Stomach (tissue), 19 donors: ENCODE measurements at regions of chr1 and their contacts with region 1.

Region 1: GRCh38 chr1:230917284-230918135 is 49.2 kb upstream of the C1orf198 start:
- DNase-seq: peak; percentile 92 to 93
- H3K4me3 ChIP-seq: no peak overlapping the region
- H3K27ac ChIP-seq: no peak overlapping the region
- H3K4me1 ChIP-seq: peaks cover 0 to 7% (median 0%) of the 10 kb centered on the region in 4 donors
- H3K27me3 ChIP-seq: no peaks in the 10 kb centered on the region
- CTCF ChIP-seq: peak in 5 of 7 experiments; percentile 19 to 68 (median 60)
- EP300 ChIP-seq: no peak
- POLR2A ChIP-seq: no peak

Region 2: GRCh38 chr1:230797942-230798418 is 119.5 kb before region 1 on chr1:
- intact Hi-C with region 1: loop called (anchors 10 kb)
- DNase-seq: peak; percentile 64 to 88
- H3K4me3 ChIP-seq: no peak overlapping the region
- H3K27ac ChIP-seq: no peak overlapping the region
- H3K4me1 ChIP-seq: peaks cover 0 to 4% (median 0%) of the 10 kb centered on the region in 4 donors
- H3K27me3 ChIP-seq: no peaks in the 10 kb centered on the region
- CTCF ChIP-seq: peak in 5 of 7 experiments; percentile 27 to 72 (median 52)
- EP300 ChIP-seq: no peak
- POLR2A ChIP-seq: no peak